Upper lobe of right lung (tissue), 1 donor: ENCODE measurements at regions of chr2 and their contacts with region 1.

Region 1: GRCh38 chr2:207473049-207473930 is 56.5 kb upstream of the CREB1 start:
- DNase-seq: no peak
- ATAC-seq: peak; percentile 83
- H3K4me3 ChIP-seq: peak overlapping the region; percentile 3
- H3K27ac ChIP-seq: no peak overlapping the region
- H3K4me1 ChIP-seq: peaks cover 11% of the 10 kb centered on the region
- H3K27me3 ChIP-seq: no peaks in the 10 kb centered on the region
- CTCF ChIP-seq: peak; percentile 66

Region 2: GRCh38 chr2:206814498-206814897 is 658.8 kb before region 1 on chr2:
- intact Hi-C with region 1: loop called (anchors 10 kb)
- DNase-seq: no peak
- ATAC-seq: no peak
- H3K4me3 ChIP-seq: no peak overlapping the region
- H3K27ac ChIP-seq: no peak overlapping the region
- H3K4me1 ChIP-seq: no peaks in the 10 kb centered on the region
- H3K27me3 ChIP-seq: no peaks in the 10 kb centered on the region
- CTCF ChIP-seq: no peak

Region 3: GRCh38 chr2:206981739-206982340 is 491.4 kb before region 1 on chr2:
- intact Hi-C with region 1: loop called (anchors 10 kb)
- DNase-seq: peak; percentile 76
- ATAC-seq: peak; percentile 92
- H3K4me3 ChIP-seq: no peak overlapping the region
- H3K27ac ChIP-seq: no peak overlapping the region
- H3K4me1 ChIP-seq: peaks cover 8% of the 10 kb centered on the region
- H3K27me3 ChIP-seq: no peaks in the 10 kb centered on the region
- CTCF ChIP-seq: peak; percentile 79